H1 (cell line): ENCODE measurements at regions of chr3 and their contacts with region 1.

Region 1: GRCh38 chr3:171328419-171329082 is 131.7 kb downstream of the TNIK start:
- DNase-seq: no peak
- H3K4me3 ChIP-seq: no peak overlapping the region
- H3K27ac ChIP-seq: no peak overlapping the region
- H3K4me1 ChIP-seq: peaks cover 0 to 13% (median 5%) of the 10 kb centered on the region in 4 experiments; a peak in 4 of 7 replicates
- H3K27me3 ChIP-seq: no peaks in the 10 kb centered on the region
- CTCF ChIP-seq: peak; percentile 30 to 60 (median 38); a peak in 3 of 4 replicates
- EP300 ChIP-seq: no peak
- POLR2A ChIP-seq: no peak
- RAD21 ChIP-seq: peak; percentile 22 to 50; a peak in 3 of 4 replicates

Region 2: DNA sequence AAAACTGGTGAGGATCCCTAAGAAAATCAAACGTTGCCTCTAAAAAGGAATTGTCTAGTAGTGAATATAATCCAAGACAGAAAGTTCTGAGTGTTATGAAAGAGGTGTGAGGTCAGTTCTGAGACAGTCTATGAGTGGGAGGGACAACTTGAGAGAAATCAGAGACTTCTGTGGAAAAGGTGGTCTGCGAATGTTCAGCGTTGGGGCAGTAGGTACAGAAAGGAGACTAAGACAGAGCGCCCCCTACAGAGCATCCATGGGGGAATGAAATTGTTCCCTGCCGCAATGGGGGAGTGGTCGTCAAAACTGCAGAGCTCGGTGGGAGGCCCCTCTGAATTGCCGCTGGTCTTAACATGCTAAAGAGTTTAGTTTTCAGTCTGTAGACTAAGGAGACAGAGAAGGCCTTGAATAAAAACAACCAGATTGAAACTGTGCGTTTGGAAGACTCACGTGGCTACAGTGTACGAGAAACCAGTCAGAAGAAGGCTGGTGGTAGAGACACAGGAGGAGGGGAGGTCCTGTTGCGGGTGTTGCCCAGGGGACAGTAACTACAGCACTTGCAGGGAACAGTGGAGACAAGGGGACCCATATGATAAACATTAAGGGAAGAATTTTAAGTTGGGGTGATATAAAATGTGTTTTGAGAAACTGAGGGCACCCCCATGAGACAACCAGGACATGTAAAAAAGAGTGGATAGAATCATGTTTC is 124.8 kb after region 1 on chr3:
- CTCF ChIA-PET with region 1: interaction called, 10 read pairs
- POLR2A ChIA-PET with region 1: no interaction called
- DNase-seq: peak in 1 of 2 experiments; percentile 83
- H3K4me3 ChIP-seq: peak overlapping the region in 2 of 4 experiments; percentile 23 to 47; a peak in 3 of 8 replicates
- H3K27ac ChIP-seq: no peak overlapping the region
- H3K4me1 ChIP-seq: peaks cover 8 to 29% (median 18%) of the 10 kb centered on the region in 4 experiments; a peak in 5 of 7 replicates
- H3K27me3 ChIP-seq: no peaks in the 10 kb centered on the region
- CTCF ChIP-seq: peak; percentile 70 to 82 (median 73)
- EP300 ChIP-seq: no peak
- POLR2A ChIP-seq: no peak
- RAD21 ChIP-seq: peak; percentile 62 to 79

Region 3: DNA sequence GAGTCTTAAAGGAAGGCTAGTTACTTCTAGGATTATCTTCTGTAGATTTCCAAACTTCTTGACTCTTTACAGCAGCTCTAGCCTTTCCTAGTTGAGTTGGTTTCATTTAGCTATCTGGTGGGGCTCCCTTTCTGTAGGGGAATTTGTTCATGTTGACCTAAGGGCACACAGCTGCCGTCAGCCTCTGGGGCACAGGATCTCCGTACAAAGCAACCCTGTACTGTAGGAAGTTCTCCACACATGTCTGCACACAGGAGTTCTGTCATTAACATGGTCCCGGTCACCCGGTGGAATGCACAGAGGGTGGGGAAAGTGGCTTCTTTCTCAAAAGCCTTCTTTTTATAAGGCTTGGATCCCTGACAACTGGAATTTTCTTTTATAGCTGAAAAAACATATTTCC is 220.4 kb after region 1 on chr3:
- CTCF ChIA-PET with region 1: no interaction called
- POLR2A ChIA-PET with region 1: no interaction called
- DNase-seq: no peak
- H3K4me3 ChIP-seq: no peak overlapping the region
- H3K27ac ChIP-seq: no peak overlapping the region
- H3K4me1 ChIP-seq: peaks cover 0 to 2% (median 0%) of the 10 kb centered on the region in 4 experiments; a peak in 2 of 7 replicates
- H3K27me3 ChIP-seq: no peaks in the 10 kb centered on the region
- CTCF ChIP-seq: no peak
- EP300 ChIP-seq: no peak
- POLR2A ChIP-seq: no peak
- RAD21 ChIP-seq: no peak